Esophagus squamous epithelium (tissue), 5 donors: ENCODE measurements at regions of chr11 and their contacts with region 1.

Region 1: DNA sequence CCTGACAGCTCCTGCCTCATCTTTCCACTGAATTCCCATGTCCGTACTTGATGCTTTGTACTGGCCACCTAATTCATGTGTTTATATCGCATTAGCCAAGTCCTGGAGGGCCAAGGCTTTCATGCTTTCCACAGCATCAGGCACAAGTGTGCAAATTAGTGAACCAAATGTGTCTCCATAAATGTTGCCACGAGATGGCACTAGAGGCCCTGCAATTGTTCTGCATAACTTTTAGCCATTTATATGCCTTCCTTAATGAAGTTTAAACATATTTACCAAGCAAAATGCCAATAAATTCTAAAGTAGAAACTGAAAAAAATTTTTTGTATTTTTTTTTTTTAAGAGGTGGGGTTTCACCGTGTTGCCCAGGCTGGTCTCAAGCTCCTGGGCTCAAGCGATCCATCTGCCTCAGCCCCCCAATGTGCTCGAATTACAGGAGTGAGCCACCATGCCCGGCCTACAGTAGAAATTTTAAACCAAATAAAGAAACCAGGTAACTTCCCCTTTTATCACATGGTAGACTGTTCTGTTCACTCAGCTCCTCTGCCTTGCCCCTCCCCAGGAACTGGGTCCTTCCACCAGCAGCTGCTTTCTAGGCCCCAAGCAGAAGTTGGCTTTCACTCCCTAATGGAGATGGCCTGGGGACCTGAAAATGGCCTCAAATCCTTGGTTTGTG is 20.8 kb upstream of the IL18BP start:
- DNase-seq: no peak
- H3K4me3 ChIP-seq: no peak overlapping the region
- H3K27ac ChIP-seq: no peak overlapping the region
- H3K4me1 ChIP-seq: peaks cover 0 to 4% (median 0%) of the 10 kb centered on the region in 3 donors
- H3K27me3 ChIP-seq: no peaks in the 10 kb centered on the region
- CTCF ChIP-seq: peak; percentile 56 to 79 (median 69)
- POLR2A ChIP-seq: no peak

Region 2: GRCh38 chr11:71465054-71465453 is 512.8 kb before region 1 on chr11:
- intact Hi-C with region 1: no loop called
- DNase-seq: no peak
- H3K4me3 ChIP-seq: no peak overlapping the region
- H3K27ac ChIP-seq: no peak overlapping the region
- H3K4me1 ChIP-seq: no peaks in the 10 kb centered on the region
- H3K27me3 ChIP-seq: no peaks in the 10 kb centered on the region
- CTCF ChIP-seq: no peak
- POLR2A ChIP-seq: no peak

Region 3: GRCh38 chr11:71489311-71490048 is 488.4 kb before region 1 on chr11:
- intact Hi-C with region 1: no loop called
- DNase-seq: no peak
- H3K4me3 ChIP-seq: no peak overlapping the region
- H3K27ac ChIP-seq: no peak overlapping the region
- H3K4me1 ChIP-seq: peaks cover 0 to 14% (median 3%) of the 10 kb centered on the region in 3 donors
- H3K27me3 ChIP-seq: no peaks in the 10 kb centered on the region
- CTCF ChIP-seq: no peak
- POLR2A ChIP-seq: no peak

Region 4: DNA sequence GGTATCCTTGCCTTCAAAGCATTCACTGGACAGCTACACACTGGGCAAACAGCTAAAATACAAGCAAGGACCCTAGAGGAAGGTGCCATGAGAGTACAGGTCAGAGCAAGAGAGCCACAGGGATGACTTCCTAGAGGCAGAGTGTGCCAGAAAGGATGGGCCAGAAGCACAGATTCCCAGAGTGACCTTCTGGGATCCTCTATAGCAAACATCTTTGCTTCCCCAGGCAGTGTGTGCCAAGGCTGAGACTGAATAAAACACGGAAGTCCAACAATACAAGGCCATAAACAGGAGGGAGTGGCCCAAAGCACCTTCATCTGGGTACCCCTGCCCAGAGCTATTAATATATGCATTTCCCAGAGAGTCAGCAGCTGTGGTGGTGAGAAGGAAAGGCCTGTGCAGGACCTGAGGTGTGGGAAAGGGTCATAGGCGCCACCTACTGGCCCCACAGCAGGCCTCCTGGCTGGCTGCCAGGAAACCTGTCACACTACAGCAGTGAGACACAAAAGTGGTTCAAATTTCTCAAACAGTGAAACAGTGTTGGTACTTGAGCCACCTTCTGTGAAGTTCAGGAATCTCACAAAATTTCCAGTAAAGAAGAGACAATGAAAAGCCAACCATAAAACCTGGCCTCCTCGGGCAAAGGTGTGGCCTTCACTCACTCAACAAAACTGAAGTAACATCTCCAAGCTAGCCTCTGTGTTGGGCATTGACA is 436.2 kb after region 1 on chr11:
- intact Hi-C with region 1: loop called (anchors 10 kb)
- DNase-seq: peak; percentile 17
- H3K4me3 ChIP-seq: no peak overlapping the region
- H3K27ac ChIP-seq: no peak overlapping the region
- H3K4me1 ChIP-seq: peaks cover 3 to 12% (median 4%) of the 10 kb centered on the region in 3 donors
- H3K27me3 ChIP-seq: no peaks in the 10 kb centered on the region
- CTCF ChIP-seq: peak; percentile 56 to 88 (median 82)
- POLR2A ChIP-seq: no peak